Activated T-helper 1 cell treated with anti-CD3 and anti-CD28 coated beads, Interleukin-12 subunit alpha, Interleukin-12 subunit beta, Interleukin-2, Interleukin-4 antibody, amounts not matched to agents 30 ng/mL and 10 ng/mL and 1 ng/mL, durations not matched to agents 14 hours and 24 hours and 36 hours (primary cell): ENCODE measurements at regions of chr17 and their contacts with region 1.

Region 1: GRCh38 chr17:67376737-67377487 is at the start of gene PITPNC1:
- DNase-seq: peak; percentile 81
- H3K4me3 Mint-ChIP-seq: peak within 1 kb of the TSS; percentile 88
- H3K27ac Mint-ChIP-seq: peak within 1 kb of the TSS; percentile 84
- H3K4me1 Mint-ChIP-seq: peaks cover 33% of the 10 kb centered on the region
- H3K27me3 Mint-ChIP-seq: peaks cover 2% of the 10 kb centered on the region
- total RNA-seq, gene PITPNC1: 17.7 and 18.3 TPM in 2 replicates

Region 2: GRCh38 chr17:67366193-67367157 is 10.4 kb before region 1 on chr17 and contains the start of gene PSMD12:
- intact Hi-C with region 1: loop called (anchors 1 kb)
- DNase-seq: peak; percentile 92
- H3K4me3 Mint-ChIP-seq: peak within 1 kb of the TSS; percentile 96
- H3K27ac Mint-ChIP-seq: peak within 1 kb of the TSS; percentile 94
- H3K4me1 Mint-ChIP-seq: peaks cover 52% of the 10 kb centered on the region
- H3K27me3 Mint-ChIP-seq: no peaks in the 10 kb centered on the region
- total RNA-seq, gene PSMD12: 87.4 TPM in 2 replicates

Region 3: DNA sequence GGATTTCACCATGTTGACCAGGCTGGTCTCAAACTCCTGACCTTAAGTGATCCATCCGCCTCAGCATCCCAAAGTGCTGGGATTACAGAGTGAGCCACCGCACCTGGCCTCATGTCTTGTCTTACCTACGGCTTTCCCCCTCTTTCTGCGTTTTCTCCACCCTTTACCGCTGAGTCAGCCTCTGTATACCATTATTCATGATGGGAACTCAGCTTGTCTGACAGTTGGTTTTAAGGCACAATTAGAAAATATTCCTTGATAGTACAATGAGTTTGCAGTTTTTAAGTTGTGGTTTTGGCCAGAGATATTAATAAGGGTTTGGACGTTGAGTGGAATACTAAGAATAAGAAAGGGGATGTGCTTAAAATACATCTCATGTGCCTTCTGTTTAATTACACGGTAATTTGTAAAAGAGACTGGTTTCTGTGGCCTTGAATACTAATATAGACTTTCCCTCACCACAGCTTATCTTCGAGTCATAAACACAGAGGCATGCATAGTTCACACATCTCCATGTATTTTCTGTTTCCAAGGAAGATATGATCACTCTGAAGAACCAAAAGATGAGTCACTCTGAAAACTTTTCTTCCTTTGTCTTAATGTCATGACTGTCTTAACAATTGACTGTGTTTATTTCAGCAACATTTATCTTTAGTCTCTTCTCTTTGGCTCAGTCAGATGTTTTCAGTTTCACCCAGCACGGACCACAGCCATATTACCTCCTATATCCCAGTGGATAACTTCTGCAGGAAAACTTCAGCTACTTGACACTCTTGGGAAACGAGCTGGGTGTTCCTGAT is 54.5 kb after region 1 on chr17:
- intact Hi-C with region 1: loop called (anchors 1 kb)
- DNase-seq: no peak
- H3K4me3 Mint-ChIP-seq: peak overlapping the region; percentile 46
- H3K27ac Mint-ChIP-seq: peak overlapping the region; percentile 85
- H3K4me1 Mint-ChIP-seq: peaks cover 51% of the 10 kb centered on the region
- H3K27me3 Mint-ChIP-seq: no peaks in the 10 kb centered on the region

Region 4: GRCh38 chr17:67602956-67603355 is 226.0 kb after region 1 on chr17:
- intact Hi-C with region 1: loop called (anchors 1 kb)
- DNase-seq: peak; percentile 16
- H3K4me3 Mint-ChIP-seq: no peak overlapping the region
- H3K27ac Mint-ChIP-seq: no peak overlapping the region
- H3K4me1 Mint-ChIP-seq: no peaks in the 10 kb centered on the region
- H3K27me3 Mint-ChIP-seq: no peaks in the 10 kb centered on the region

Region 5: GRCh38 chr17:67689534-67690177 is 312.7 kb after region 1 on chr17:
- intact Hi-C with region 1: loop called (anchors 1 kb)
- DNase-seq: peak; percentile 31
- H3K4me3 Mint-ChIP-seq: no peak overlapping the region
- H3K27ac Mint-ChIP-seq: no peak overlapping the region
- H3K4me1 Mint-ChIP-seq: no peaks in the 10 kb centered on the region
- H3K27me3 Mint-ChIP-seq: no peaks in the 10 kb centered on the region

Region 6: DNA sequence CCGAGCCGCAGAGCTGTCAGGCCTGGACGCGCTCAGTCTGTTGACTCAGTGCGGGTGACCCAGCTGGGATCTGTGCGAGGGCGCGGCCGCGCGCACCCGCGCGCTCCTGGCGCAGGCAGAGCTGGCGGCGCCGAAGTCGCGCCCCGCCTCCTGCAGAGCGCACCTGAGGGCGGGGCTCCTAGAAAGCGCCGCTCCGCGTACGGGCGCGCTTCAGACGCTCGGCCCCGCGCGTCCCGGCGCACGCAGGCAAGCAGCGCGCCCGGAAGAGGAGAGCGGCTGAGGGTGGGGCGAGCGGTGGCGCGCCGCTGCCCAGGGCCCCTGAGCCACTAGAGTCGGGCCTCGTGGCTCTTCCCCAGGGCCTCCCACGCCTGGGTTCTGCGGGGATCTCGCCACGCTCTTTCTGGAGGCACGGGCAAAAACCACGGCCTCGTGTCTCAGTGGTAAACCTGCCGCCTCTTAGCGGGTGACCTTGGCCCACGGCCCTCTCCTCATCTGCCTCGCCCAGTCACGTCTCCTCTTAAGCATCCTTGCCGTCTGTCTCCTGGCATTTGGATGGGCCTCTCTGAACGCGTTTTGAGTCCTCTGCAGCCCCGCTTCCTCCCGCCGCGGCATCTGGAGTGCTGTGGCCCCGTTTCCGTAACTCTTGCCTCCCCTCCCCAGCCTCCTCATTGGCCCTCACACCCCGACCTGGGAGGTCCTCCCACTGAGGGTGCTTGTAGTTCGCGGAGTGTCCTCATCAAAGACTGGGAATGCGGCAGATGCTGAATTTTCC is 1950.3 kb after region 1 on chr17 and contains the start of gene ABCA5:
- intact Hi-C with region 1: loop called (anchors 5 kb)
- DNase-seq: peak; percentile 86
- H3K4me3 Mint-ChIP-seq: peak within 1 kb of the TSS; percentile 97
- H3K27ac Mint-ChIP-seq: peak within 1 kb of the TSS; percentile 96
- H3K4me1 Mint-ChIP-seq: peaks cover 23% of the 10 kb centered on the region
- H3K27me3 Mint-ChIP-seq: peaks cover 13% of the 10 kb centered on the region
- total RNA-seq, gene ABCA5: 12.8 and 15.1 TPM in 2 replicates